ENCODE measurements at regions of chr17 and their contacts with region 1.

Region 1: GRCh38 chr17:17972126-17972951 is at the starts of genes DRC3 and TOM1L2:
- DNase-seq: peak; percentile 100
- H3K4me3 ChIP-seq: peak within 1 kb of the TSS; percentile 63 to 79 (median 77)
- H3K27ac ChIP-seq: peak within 1 kb of the TSS; percentile 93
- H3K4me1 ChIP-seq: peaks cover 16% of the 10 kb centered on the region
- H3K27me3 ChIP-seq: no peaks in the 10 kb centered on the region
- CTCF ChIP-seq: no peak
- total RNA-seq, gene DRC3: 0.85 to 1.0 TPM
- total RNA-seq, gene TOM1L2: 42.8 to 71.1 TPM

Region 2: DNA sequence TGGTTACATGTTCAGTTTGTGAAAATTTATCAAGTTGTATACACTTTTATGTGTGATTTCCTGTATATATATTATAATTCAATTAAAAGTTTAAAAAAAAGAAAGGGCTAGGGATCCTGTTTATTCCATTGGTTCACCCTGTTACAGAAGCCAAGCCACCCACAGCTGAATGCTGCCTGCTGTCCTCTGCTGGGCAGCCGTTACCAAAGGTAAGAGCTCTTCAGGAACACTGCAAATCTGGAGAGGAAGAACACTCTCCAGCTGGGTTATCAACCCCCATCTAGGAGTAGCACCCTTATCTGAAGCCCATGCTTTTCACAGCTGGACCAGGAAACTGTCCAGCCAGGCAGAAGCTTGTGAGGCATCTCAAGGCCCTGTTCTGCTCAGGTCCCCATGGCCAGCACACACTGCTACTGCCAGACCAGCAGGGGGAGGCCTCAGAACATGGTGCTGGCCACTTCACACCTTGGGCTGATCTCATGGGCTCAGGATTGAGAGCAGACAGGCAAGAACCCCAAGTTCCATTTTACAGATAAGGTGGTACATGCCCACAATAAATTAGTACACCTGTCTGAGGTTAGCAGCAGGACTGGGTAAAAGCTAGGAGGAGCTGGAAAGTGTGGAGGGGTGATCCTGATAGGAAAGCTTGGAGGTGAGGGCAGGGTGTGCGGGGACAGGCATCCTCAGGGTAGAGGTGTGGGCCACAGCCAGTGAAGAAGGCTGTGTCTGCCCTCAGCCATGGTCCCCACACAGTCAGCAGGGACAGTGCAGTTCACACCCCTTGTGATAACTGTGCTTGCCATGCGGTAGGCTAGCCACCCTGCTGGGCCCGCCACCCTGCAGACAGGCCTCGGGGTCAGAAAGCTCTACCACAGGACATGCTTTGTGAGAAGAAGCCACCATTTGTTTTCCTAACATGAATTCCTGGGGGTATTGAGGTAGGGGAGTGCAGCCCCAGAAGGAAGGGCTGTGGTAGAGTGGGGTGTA is 81.3 kb before region 1 on chr17:
- CTCF ChIA-PET with region 1: no interaction called
- dilution Hi-C with region 1: no loop called
- in situ Hi-C with region 1: no loop called
- intact Hi-C with region 1: loop called (anchors 1 kb)
- DNase-seq: peak; percentile 57
- H3K4me3 ChIP-seq: no peak overlapping the region
- H3K27ac ChIP-seq: no peak overlapping the region
- H3K4me1 ChIP-seq: no peaks in the 10 kb centered on the region
- H3K27me3 ChIP-seq: no peaks in the 10 kb centered on the region
- CTCF ChIP-seq: peak; percentile 86 to 95

Region 3: DNA sequence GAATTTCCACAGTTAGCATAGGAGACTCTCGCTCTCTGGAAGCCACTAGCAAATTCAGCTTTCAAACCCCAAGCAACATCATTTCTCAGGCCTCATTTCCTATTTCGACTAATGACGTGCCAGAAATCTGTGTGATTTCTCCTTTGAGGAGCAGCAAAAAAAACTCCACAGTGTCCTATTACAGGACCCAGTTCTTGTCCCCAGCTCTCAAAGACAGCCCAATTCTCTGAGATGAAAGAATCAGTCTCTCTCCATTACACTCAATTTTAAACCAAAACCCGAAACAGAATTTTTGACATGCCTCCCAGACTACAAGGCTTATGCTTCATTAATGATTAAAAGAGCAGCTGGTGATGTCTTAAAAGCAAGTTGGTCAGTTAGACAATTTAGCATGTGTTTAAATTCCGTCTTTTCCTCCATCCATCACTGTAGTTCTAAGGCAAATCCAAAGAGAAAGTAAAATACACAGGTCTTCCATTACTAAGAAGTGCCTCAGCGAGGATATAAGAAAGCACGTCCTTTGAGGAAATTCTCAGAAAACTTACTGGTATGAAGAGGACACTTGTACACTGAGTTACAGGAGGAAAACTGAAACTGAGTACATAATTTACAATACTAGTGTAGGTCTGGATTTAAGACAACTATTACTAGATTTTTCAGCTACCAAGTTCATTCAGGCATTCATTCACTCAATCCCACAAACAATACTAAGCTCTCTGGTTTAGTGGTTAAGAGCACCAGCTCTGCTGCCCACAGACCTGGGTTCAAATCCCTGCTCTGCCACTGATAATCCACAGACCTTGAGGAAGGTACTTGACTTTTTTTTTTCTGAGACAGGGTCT is 12.6 kb before region 1 on chr17:
- CTCF ChIA-PET with region 1: no interaction called
- dilution Hi-C with region 1: no loop called
- in situ Hi-C with region 1: no loop called
- intact Hi-C with region 1: loop called (anchors 1 kb)
- DNase-seq: no peak
- H3K4me3 ChIP-seq: no peak overlapping the region
- H3K27ac ChIP-seq: peak overlapping the region; percentile 97
- H3K4me1 ChIP-seq: peaks cover 32% of the 10 kb centered on the region
- H3K27me3 ChIP-seq: no peaks in the 10 kb centered on the region
- CTCF ChIP-seq: no peak

Region 4: DNA sequence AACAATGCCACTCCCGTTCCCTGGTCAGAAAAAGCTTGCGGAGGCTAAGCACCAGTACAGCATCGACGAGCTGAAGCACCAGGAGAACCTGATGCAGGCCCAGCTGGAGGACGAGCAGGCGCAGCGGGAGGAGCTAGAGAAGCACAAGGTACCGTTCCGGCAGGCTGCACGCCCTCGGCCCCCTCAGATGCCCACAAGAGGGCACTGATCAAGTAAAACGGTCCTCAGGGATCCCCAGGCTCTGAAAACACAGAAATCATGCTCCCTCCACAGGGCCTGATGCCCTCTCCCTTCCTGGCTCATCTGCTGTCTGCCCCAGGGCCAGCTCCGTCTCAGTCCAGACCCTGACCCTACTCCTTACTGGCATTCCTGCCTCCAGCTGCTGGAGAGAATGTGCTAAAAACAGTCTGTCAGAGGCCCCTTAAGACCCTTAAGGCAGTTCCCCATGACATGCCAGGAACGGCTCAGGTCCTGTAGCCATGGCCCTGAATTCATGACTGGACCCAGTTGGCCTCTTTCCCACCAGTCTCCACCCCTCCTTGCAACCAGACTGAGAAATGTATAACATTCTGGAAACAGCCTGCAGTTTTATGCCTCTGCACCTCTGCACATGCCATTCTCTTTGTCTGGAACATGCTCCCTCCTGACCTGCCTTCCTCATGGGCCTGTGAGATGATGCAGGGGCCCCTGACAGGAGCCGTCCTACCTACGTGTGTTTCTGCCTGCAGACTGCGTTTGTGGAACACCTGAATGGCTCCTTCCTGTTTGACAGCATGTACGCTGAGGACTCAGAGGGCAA is 22.1 kb after region 1 on chr17:
- CTCF ChIA-PET with region 1: no interaction called
- dilution Hi-C with region 1: no loop called
- in situ Hi-C with region 1: no loop called
- intact Hi-C with region 1: loop called (anchors 1 kb)
- DNase-seq: no peak
- H3K4me3 ChIP-seq: no peak overlapping the region
- H3K27ac ChIP-seq: no peak overlapping the region
- H3K4me1 ChIP-seq: peaks cover 14% of the 10 kb centered on the region
- H3K27me3 ChIP-seq: no peaks in the 10 kb centered on the region
- CTCF ChIP-seq: peak in 1 of 2 donors; percentile 14

Region 5: DNA sequence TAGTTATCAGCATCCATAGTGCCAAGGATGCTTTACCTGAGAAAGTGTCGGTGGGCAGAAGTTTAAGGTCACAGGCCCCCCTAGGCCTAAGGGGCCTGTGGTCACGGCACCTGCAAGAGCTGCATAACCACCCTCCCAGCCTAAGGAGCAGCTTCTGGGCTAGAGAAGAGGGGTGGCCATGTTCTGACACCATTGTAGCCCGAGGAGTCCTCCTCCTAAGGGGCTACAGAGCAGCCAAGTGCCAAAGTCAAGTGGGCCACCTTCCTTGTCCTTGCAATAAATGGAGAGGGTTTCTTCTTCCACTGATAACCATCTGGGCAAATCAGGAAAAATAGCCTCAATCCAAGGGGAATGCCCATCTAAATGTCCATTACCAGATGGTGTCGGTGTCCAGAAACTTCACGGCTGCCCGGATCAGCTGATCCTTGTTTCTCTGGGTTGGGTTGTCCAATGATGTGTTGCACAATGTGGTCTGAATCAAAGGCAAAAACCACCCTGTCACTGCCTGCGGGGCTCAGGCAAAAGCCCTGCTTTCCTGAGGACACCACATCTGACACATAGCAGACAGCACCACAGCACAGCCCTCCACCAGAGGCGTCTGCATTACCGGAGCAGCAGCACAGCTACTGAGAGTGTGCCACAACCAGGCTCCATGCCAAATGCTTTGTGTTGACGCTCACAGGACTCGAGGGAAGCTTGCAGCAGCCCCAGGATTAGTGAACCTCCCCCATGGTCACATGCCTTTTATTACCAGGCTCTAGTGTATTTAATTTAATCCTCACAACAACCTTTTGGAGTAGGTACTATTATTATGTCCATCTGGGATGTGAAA is 53.8 kb after region 1 on chr17:
- CTCF ChIA-PET with region 1: no interaction called
- dilution Hi-C with region 1: no loop called
- in situ Hi-C with region 1: no loop called
- intact Hi-C with region 1: loop called (anchors 5 kb)
- DNase-seq: peak; percentile 68
- H3K4me3 ChIP-seq: no peak overlapping the region
- H3K27ac ChIP-seq: peak overlapping the region; percentile 80
- H3K4me1 ChIP-seq: peaks cover 37% of the 10 kb centered on the region
- H3K27me3 ChIP-seq: no peaks in the 10 kb centered on the region
- CTCF ChIP-seq: peak in 1 of 2 donors; percentile 19

Region 6: DNA sequence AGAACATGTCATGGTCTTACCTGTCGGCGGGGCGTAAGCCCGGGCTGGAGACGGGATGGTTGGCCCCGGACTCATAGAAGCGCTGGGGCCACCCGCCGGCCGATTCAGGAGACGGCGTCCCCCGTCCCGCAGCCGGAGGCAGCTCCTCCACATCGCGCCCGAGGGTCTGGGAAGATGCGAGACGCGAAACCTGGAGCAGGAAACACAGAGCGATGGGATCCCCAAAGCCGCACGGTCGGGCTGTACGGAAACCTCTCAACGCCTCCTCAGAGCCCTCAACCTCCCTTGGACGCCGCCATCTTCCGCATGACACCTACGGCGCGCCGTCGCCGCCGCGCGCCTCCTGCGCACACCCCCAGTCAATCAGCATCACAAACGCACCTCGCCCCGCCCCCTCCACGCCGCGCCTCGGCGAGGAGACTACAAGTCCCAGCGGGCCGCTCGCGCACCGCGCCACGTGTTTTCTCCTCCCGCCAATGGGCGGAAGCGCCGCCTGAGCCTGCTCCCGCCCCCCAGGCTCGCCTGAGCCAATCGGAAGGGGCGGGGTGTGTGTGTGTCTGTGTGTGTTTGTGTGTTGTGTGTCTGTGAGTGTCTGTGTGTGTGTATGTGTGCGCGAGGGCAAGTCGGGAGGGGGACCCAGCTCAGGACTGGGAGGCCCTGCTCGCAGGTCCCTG is 66.7 kb after region 1 on chr17 and contains the starts of genes ATPAF2 and GID4:
- CTCF ChIA-PET with region 1: no interaction called
- dilution Hi-C with region 1: no loop called
- in situ Hi-C with region 1: no loop called
- intact Hi-C with region 1: loop called (anchors 1 kb)
- DNase-seq: peak; percentile 99
- H3K4me3 ChIP-seq: peak within 1 kb of the TSS; percentile 88 to 90 (median 89)
- H3K27ac ChIP-seq: peak within 1 kb of the TSS; percentile 65
- H3K4me1 ChIP-seq: peaks cover 24% of the 10 kb centered on the region
- H3K27me3 ChIP-seq: no peaks in the 10 kb centered on the region
- CTCF ChIP-seq: peak in 1 of 2 donors; percentile 32
- total RNA-seq, gene ATPAF2: 17.0 to 23.5 TPM
- total RNA-seq, gene GID4: 11.2 to 16.4 TPM

Region 7: GRCh38 chr17:19507775-19508576 is 1535.6 kb after region 1 on chr17:
- CTCF ChIA-PET with region 1: no interaction called
- dilution Hi-C with region 1: no loop called
- in situ Hi-C with region 1: no loop called
- intact Hi-C with region 1: no loop called
- DNase-seq: peak; percentile 86
- H3K4me3 ChIP-seq: peak overlapping the region; percentile 58 to 79 (median 58)
- H3K27ac ChIP-seq: no peak overlapping the region
- H3K4me1 ChIP-seq: no peaks in the 10 kb centered on the region
- H3K27me3 ChIP-seq: no peaks in the 10 kb centered on the region
- CTCF ChIP-seq: peak in 1 of 2 donors; percentile 9

Measured in mammary epithelial cell (primary cell).